Breast epithelium (tissue), 4 donors: ENCODE measurements at regions of chr16 and their contacts with region 1.

Region 1: GRCh38 chr16:68040507-68041288 is 17.6 kb downstream of the DUS2 start:
- DNase-seq: peak; percentile 70 to 82
- H3K4me3 ChIP-seq: no peak overlapping the region
- H3K27ac ChIP-seq: no peak overlapping the region
- H3K4me1 ChIP-seq: no peaks in the 10 kb centered on the region
- H3K27me3 ChIP-seq: no peaks in the 10 kb centered on the region
- CTCF ChIP-seq: peak; percentile 70 to 85 (median 82)
- POLR2A ChIP-seq: no peak

Region 2: GRCh38 chr16:67816240-67817031 is 224.3 kb before region 1 on chr16:
- intact Hi-C with region 1: loop called (anchors 10 kb)
- DNase-seq: peak; percentile 57 to 90
- H3K4me3 ChIP-seq: peak overlapping the region in 1 of 3 donors; percentile 13
- H3K27ac ChIP-seq: no peak overlapping the region
- H3K4me1 ChIP-seq: no peaks in the 10 kb centered on the region
- H3K27me3 ChIP-seq: no peaks in the 10 kb centered on the region
- CTCF ChIP-seq: peak; percentile 98 to 100 (median 99)
- POLR2A ChIP-seq: no peak

Region 3: GRCh38 chr16:67872786-67873537 is 167.7 kb before region 1 on chr16 and contains the start of gene EDC4:
- intact Hi-C with region 1: loop called (anchors 10 kb)
- DNase-seq: peak; percentile 54 to 81
- H3K4me3 ChIP-seq: peak within 1 kb of the TSS; percentile 82 to 98 (median 97)
- H3K27ac ChIP-seq: peak within 1 kb of the TSS; percentile 86 to 88
- H3K4me1 ChIP-seq: peaks cover 0 to 20% of the 10 kb centered on the region in 2 donors
- H3K27me3 ChIP-seq: no peaks in the 10 kb centered on the region
- CTCF ChIP-seq: no peak
- POLR2A ChIP-seq: peak; percentile 28
- total RNA-seq, gene EDC4: 43.3 to 57.0 (median 53.6) TPM

Region 4: DNA sequence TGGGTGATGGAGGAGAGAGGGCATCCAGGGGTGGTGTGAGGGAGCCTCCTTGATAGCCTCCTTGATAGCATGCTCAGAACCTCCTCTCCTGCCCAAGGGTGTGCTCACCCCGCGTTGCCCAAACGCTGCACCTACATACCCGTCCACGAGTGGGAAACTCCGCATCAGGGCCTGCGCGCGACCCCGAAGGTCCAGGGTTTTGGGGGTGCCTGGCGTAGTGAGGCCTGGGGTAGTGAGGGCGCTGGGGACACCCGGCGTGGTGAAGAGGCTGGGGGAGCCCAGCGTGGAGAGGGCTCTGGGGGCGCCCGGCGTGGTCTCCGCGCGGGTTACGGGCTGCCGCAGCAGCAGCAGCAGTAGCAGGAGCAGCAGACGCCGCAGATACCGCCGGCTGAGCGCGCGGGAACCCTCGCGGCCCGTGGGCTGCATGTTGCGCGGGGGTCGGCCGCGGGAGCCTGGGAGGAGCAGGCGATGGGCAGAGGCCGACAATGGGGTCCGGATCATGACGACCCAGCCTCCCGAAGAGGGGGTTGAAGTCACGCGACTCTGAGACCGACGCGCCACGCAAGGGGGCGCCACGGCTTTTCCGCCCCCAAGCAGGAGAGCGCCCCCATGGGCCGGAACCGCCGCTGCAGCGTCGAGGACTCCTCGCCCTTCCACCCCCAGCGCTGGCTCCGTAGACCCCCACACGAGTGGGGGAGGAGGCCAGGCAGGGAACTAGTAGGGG is 60.6 kb before region 1 on chr16 and contains the start of gene DPEP3:
- intact Hi-C with region 1: loop called (anchors 5 kb)
- DNase-seq: no peak
- H3K4me3 ChIP-seq: no peak within 1 kb of the TSS
- H3K27ac ChIP-seq: no peak within 1 kb of the TSS
- H3K4me1 ChIP-seq: no peaks in the 10 kb centered on the region
- H3K27me3 ChIP-seq: no peaks in the 10 kb centered on the region
- CTCF ChIP-seq: no peak
- POLR2A ChIP-seq: no peak
- total RNA-seq, gene DPEP3: 0.29 TPM in 1 of 3 donors, not detected in the others

Region 5: GRCh38 chr16:68074850-68075555 is 34.3 kb after region 1 on chr16:
- intact Hi-C with region 1: no loop called
- DNase-seq: no peak
- H3K4me3 ChIP-seq: no peak overlapping the region
- H3K27ac ChIP-seq: no peak overlapping the region
- H3K4me1 ChIP-seq: no peaks in the 10 kb centered on the region
- H3K27me3 ChIP-seq: no peaks in the 10 kb centered on the region
- CTCF ChIP-seq: no peak
- POLR2A ChIP-seq: no peak